Sciatic nerve (tissue), 2 donors: ENCODE measurements at regions of chr22 and their contacts with region 1.

Region 1: GRCh38 chr22:35341090-35341874 is 39.6 kb upstream of the HMOX1 start:
- DNase-seq: no peak
- ATAC-seq: no peak

Region 2: DNA sequence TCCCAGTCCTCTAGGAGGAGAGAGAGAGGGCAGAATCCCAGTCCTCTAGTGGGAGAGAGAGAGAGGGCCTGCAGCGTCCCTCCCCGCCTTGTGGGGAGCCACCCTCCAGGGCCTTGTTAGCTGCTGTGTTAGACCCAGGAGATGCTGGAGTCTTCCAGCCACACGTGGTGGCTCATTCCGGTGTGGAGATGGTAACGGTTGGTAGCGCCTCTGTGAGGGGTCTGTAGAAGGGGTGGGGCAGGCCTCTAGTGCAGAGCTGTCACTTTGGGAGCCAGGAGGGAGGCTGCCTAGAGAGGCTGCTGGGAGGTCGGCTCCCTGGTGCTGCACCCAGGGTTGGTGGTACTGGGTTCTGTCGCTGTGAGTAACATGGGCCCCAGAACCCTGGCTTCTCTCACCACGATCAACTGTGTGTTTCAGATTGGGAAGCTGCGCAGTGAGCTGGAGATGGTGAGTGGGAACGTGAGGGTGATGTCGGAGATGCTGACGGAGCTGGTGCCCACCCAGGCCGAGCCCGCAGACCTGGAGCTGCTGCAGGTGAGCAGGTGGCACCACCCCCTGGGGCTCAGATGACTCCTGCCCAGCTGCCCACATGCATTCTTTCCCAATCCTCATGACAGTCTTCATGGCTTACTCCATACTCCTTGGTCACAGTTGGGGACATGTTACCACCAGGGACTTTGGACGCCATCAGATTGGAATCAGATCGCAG is 14.3 kb before region 1 on chr22:
- intact Hi-C with region 1: loop called (anchors 1 kb)
- DNase-seq: no peak
- ATAC-seq: no peak

Region 3: GRCh38 chr22:35446365-35446764 is 105.1 kb after region 1 on chr22:
- intact Hi-C with region 1: no loop called
- DNase-seq: no peak
- ATAC-seq: no peak

Region 4: DNA sequence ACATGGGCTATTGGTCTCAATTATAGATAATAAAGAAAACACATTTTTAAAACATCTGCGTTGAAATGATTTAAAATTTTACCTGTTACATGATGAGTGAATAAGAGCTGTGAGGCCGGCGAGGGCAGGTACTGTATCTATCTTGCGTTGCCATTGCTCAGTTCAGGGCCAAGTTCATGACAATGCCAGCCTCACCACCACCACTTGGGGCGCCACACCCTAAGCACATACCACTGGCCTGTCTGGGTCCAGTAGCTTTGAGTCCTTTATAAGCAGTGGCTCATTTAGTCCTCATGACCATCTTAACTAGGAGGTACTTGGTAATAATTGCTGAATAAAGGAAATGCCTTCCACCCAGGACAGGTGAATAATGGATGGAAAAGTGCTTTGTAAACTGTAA is 290.3 kb after region 1 on chr22:
- intact Hi-C with region 1: no loop called
- DNase-seq: peak; percentile 58
- ATAC-seq: no peak